Sigmoid colon (tissue), 7 donors: ENCODE measurements at regions of chr13 and their contacts with region 1.

Region 1: GRCh38 chr13:77697217-77698103 is at the start of gene SLAIN1:
- DNase-seq: peak; percentile 87
- H3K4me3 ChIP-seq: peak within 1 kb of the TSS; percentile 56 to 94 (median 82)
- H3K27ac ChIP-seq: peak within 1 kb of the TSS; percentile 68 to 74 (median 74)
- H3K4me1 ChIP-seq: peaks cover 0 to 20% (median 12%) of the 10 kb centered on the region in 4 donors
- H3K27me3 ChIP-seq: no peaks in the 10 kb centered on the region
- CTCF ChIP-seq: no peak
- EP300 ChIP-seq: no peak
- POLR2A ChIP-seq: no peak
- total RNA-seq, gene SLAIN1: 6.5 to 19.3 (median 13.0) TPM

Region 2: GRCh38 chr13:76641056-76641455 is 1056.4 kb before region 1 on chr13:
- intact Hi-C with region 1: loop called (anchors 10 kb)
- DNase-seq: no peak
- H3K4me3 ChIP-seq: no peak overlapping the region
- H3K27ac ChIP-seq: peak overlapping the region in 2 of 4 donors; percentile 67 to 75
- H3K4me1 ChIP-seq: peaks cover 0 to 43% (median 30%) of the 10 kb centered on the region in 4 donors
- H3K27me3 ChIP-seq: no peaks in the 10 kb centered on the region
- CTCF ChIP-seq: no peak
- EP300 ChIP-seq: no peak
- POLR2A ChIP-seq: no peak

Region 3: GRCh38 chr13:77329133-77329910 is 368.1 kb before region 1 on chr13:
- intact Hi-C with region 1: loop called (anchors 2 kb)
- DNase-seq: peak; percentile 88
- H3K4me3 ChIP-seq: peak overlapping the region; percentile 66 to 87 (median 85)
- H3K27ac ChIP-seq: peak overlapping the region; percentile 83 to 93 (median 88)
- H3K4me1 ChIP-seq: peaks cover 3 to 37% (median 29%) of the 10 kb centered on the region in 4 donors
- H3K27me3 ChIP-seq: no peaks in the 10 kb centered on the region
- CTCF ChIP-seq: no peak
- EP300 ChIP-seq: no peak
- POLR2A ChIP-seq: peak in 1 of 2 donors; percentile 38

Region 4: DNA sequence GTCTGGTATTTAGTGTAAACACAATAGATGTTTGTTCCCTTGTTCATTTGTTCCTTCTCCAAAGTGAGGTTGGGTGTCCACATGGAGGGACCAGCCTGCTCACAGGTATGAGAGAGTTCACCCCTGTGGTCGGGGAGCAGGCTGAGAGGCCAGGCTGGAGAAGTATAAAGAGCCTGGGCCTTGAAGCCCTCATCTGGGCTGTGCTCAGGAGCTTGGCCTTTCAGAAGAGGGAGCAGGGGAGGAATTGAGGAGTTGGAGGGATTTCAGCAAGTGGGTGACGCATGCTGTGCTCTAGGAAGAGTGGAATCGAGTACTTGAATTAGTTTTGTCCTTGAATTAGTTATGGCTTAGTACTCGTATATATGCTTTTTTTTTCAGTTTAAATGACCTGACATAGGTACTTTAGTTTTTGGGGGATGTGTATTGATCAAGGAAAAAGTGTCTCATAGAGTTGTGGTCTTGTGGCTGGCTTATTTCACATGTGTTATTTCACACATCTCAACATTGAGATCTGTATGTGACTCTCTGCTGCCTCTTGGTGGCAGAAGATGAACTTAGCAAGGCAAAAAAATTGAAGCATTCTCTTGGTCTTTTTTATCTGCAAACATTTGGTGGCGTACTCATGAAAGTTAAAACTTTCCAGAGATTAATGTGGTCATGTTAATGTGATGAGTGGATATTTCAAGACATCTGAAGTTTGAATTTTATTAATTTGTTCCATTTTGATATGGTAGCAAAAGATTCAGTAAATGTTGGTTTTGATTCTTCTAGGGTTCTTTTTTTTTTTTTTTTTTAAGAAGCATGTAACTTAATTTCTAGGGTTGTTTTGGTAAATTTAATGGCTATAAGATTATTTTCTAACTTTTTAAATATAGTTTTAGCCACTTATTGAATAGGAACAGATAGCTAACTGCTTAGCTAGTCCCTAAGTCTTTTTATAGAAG is 54.3 kb after region 1 on chr13:
- intact Hi-C with region 1: loop called (anchors 5 kb)
- DNase-seq: no peak
- H3K4me3 ChIP-seq: no peak overlapping the region
- H3K27ac ChIP-seq: no peak overlapping the region
- H3K4me1 ChIP-seq: no peaks in the 10 kb centered on the region
- H3K27me3 ChIP-seq: no peaks in the 10 kb centered on the region
- CTCF ChIP-seq: peak; percentile 39 to 69 (median 44)
- EP300 ChIP-seq: no peak
- POLR2A ChIP-seq: no peak